ENCODE measurements at regions of chr19 and their contacts with region 1.

Region 1: GRCh38 chr19:47124937-47125668 is 5.5 kb upstream of the SAE1 start:
- DNase-seq: no peak
- H3K4me3 ChIP-seq: no peak overlapping the region
- H3K27ac ChIP-seq: no peak overlapping the region
- H3K4me1 ChIP-seq: no peaks in the 10 kb centered on the region
- H3K27me3 ChIP-seq: no peaks in the 10 kb centered on the region
- CTCF ChIP-seq: peak; percentile 75

Region 2: GRCh38 chr19:47035127-47036096 is 89.7 kb before region 1 on chr19:
- intact Hi-C with region 1: no loop called
- DNase-seq: peak; percentile 84
- H3K4me3 ChIP-seq: peak overlapping the region; percentile 65
- H3K27ac ChIP-seq: peak overlapping the region; percentile 40
- H3K4me1 ChIP-seq: peaks cover 15% of the 10 kb centered on the region
- H3K27me3 ChIP-seq: peaks cover 43% of the 10 kb centered on the region
- CTCF ChIP-seq: peak; percentile 98

Region 3: DNA sequence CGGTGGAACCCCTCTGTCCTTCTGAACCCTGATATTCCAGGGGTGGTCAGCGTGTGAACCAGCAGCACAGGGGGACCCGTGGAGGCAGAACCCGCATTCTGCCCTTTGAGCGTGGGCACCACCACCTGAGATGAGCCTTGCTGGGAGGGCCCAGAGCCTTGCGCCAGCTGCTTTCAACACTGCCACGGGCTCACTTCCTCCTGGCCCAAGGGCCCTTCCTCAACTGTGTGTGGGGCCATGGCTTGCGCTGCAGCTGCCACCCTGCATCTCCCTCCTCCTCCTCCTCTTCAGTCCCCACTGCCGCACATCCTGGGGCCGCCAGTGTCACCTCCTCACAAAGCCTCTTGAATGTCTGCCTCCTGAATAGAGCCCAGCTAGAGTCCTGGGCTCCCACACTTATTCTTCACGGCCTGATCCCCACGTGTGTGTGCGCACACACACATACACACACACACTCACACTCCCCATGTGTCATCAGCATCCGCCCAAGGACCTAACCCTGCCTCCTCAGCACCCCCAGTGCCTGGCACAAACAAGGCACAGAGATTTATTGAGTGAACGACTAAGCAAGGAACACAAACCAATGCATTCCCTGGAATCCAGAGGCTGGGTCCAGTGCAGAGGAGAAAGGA is 49.8 kb before region 1 on chr19:
- intact Hi-C with region 1: loop called (anchors 5 kb)
- DNase-seq: no peak
- H3K4me3 ChIP-seq: no peak overlapping the region
- H3K27ac ChIP-seq: no peak overlapping the region
- H3K4me1 ChIP-seq: peaks cover 13% of the 10 kb centered on the region
- H3K27me3 ChIP-seq: no peaks in the 10 kb centered on the region
- CTCF ChIP-seq: no peak

Region 4: GRCh38 chr19:47086280-47086679 is 38.8 kb before region 1 on chr19:
- intact Hi-C with region 1: no loop called
- DNase-seq: no peak
- H3K4me3 ChIP-seq: no peak overlapping the region
- H3K27ac ChIP-seq: no peak overlapping the region
- H3K4me1 ChIP-seq: no peaks in the 10 kb centered on the region
- H3K27me3 ChIP-seq: no peaks in the 10 kb centered on the region
- CTCF ChIP-seq: no peak

Measured in left ventricle myocardium inferior (tissue), 1 donor.